Activated naive CD4-positive, alpha-beta T cell treated with anti-CD3 and anti-CD28 coated beads for 36 hours (primary cell): ENCODE measurements at regions of chr6 and their contacts with region 1.

Region 1: GRCh38 chr6:29016559-29017427 is 11.7 kb upstream of the ZNF311 start:
- DNase-seq: peak; percentile 92
- H3K4me3 Mint-ChIP-seq: peak overlapping the region; percentile 90
- H3K27ac Mint-ChIP-seq: peak overlapping the region; percentile 84
- H3K4me1 Mint-ChIP-seq: peaks cover 12% of the 10 kb centered on the region
- H3K27me3 Mint-ChIP-seq: peaks cover 9% of the 10 kb centered on the region

Region 2: DNA sequence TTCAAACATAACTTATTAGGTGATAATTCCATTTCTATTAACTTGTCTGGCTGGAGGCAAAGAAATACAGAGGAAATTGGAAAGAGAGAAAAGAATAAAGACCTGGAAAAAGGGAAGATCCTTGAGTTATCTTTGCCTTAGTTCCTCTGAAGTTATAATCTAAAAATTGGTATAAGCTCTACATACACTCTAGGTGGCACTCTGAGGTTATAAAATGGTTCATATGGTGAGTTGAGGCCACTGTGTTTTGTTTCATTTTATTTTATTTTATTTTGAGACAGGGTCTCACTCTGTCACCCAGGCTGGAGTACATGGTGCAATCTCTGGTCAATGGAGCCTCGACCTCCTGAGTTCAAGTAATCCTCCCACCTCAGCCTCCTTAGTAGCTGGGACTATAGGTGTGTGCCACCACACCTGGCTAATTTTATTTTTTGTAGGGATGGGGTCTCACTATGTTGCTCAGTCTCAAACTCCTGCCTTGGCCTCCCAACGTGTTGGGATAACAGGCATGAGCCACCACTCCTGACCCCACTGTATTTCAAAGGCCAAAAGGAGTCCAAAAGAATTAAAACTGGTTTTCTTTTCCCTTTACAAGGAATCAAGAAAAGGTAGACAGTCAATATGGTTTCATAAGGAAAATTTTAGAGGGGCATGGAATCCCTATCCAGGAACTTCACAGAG is 520.6 kb before region 1 on chr6:
- CTCF ChIA-PET with region 1: no interaction called
- intact Hi-C with region 1: loop called (anchors 2 kb)
- DNase-seq: no peak
- H3K4me3 Mint-ChIP-seq: no peak overlapping the region
- H3K27ac Mint-ChIP-seq: no peak overlapping the region
- H3K4me1 Mint-ChIP-seq: peaks cover 8% of the 10 kb centered on the region
- H3K27me3 Mint-ChIP-seq: peaks cover 18% of the 10 kb centered on the region

Region 3: DNA sequence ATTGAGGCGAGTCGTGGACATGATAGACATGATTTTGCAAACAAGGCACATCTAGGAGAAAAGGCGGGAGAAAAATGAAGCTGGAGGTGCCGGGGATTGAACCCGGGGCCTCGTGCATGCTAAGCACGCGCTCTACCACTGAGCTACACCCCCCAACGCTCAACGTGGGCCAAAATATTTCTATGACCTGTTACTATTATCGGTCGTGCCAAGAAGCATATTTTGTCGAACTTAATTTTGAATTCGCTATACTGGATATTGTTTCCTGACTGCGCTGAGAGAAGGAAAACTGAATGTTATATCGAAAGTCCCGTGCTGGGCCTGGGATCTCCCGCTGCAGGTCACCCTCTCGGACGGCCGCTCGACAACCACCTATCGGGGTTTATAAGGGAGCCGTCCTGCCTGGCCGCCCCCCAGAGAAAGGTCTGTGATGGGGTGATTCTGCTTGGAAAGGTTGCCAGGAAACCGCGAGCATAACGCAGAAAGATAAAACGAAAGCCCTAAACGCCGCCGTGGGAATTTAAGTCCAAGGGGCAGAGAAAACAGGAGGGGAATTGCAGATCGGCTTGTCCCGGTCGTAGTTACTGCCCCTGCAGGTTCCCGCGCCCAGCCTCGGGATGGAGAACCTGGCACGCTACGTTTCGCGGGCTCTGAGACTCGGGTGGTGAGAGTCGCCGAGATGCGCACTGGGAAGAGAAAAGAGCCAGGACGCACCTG is 153.0 kb before region 1 on chr6:
- CTCF ChIA-PET with region 1: interaction called, 4 read pairs
- intact Hi-C with region 1: loop called (anchors 1 kb)
- DNase-seq: peak; percentile 89
- H3K4me3 Mint-ChIP-seq: peak overlapping the region; percentile 86
- H3K27ac Mint-ChIP-seq: peak overlapping the region; percentile 92
- H3K4me1 Mint-ChIP-seq: peaks cover 33% of the 10 kb centered on the region
- H3K27me3 Mint-ChIP-seq: peaks cover 3% of the 10 kb centered on the region

Region 4: GRCh38 chr6:28988536-28989311 is 28.1 kb before region 1 on chr6:
- CTCF ChIA-PET with region 1: interaction called, 6 read pairs
- intact Hi-C with region 1: loop called (anchors 1 kb)
- DNase-seq: peak; percentile 83
- H3K4me3 Mint-ChIP-seq: peak overlapping the region; percentile 83
- H3K27ac Mint-ChIP-seq: peak overlapping the region; percentile 50
- H3K4me1 Mint-ChIP-seq: peaks cover 21% of the 10 kb centered on the region
- H3K27me3 Mint-ChIP-seq: peaks cover 18% of the 10 kb centered on the region

Region 5: GRCh38 chr6:29399525-29399924 is 382.7 kb after region 1 on chr6:
- CTCF ChIA-PET with region 1: no interaction called
- intact Hi-C with region 1: no loop called
- DNase-seq: no peak
- H3K4me3 Mint-ChIP-seq: no peak overlapping the region
- H3K27ac Mint-ChIP-seq: no peak overlapping the region
- H3K4me1 Mint-ChIP-seq: no peaks in the 10 kb centered on the region
- H3K27me3 Mint-ChIP-seq: peaks cover 32% of the 10 kb centered on the region

Region 6: GRCh38 chr6:29589423-29590048 is 572.7 kb after region 1 on chr6:
- CTCF ChIA-PET with region 1: no interaction called
- intact Hi-C with region 1: loop called (anchors 1 kb)
- DNase-seq: peak; percentile 74
- H3K4me3 Mint-ChIP-seq: no peak overlapping the region
- H3K27ac Mint-ChIP-seq: no peak overlapping the region
- H3K4me1 Mint-ChIP-seq: no peaks in the 10 kb centered on the region
- H3K27me3 Mint-ChIP-seq: peaks cover 9% of the 10 kb centered on the region